Activated naive CD4-positive, alpha-beta T cell treated with anti-CD3 and anti-CD28 coated beads for 36 hours (primary cell): ENCODE measurements at regions of chr19 and their contacts with region 1.

Region 1: DNA sequence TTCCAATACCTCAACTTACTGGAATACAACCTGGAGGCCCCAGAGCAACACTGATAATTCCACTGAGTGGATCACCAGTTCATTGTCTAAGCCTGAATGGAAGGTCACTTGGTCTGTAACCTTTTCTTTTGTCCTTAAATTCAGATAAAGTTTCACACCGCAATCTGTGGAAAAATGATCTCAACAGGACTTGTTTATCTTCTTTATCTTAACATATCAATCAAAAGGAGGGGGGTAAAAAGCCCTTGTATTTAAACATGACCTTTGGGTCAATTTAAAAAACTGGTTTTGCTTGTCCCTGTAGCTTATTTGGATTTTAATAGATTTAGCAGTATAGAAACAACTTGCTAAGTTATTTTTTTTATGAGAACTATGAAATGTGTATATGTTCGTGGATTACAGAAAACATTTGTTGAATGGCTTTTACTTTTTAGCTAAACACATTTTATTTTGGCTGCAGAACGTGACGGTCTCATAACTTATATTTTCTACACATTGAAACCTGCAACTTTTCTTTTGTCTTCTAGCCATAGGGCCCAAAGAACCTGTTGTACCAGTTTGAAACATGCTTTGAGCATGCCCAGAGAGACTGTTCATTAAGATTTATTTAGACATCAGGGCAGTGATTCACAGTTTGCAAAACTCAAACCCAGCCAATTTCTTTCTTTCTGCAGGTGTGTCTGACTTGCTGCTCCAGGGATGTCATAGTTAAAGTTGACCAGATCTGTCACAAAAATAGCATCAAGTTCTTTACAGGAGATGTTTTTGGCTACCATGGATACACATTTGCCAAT is 21.8 kb downstream of the SAE1 start:
- DNase-seq: no peak
- H3K4me3 Mint-ChIP-seq: no peak overlapping the region
- H3K27ac Mint-ChIP-seq: peak overlapping the region; percentile 30
- H3K4me1 Mint-ChIP-seq: peaks cover 60% of the 10 kb centered on the region
- H3K27me3 Mint-ChIP-seq: no peaks in the 10 kb centered on the region

Region 2: DNA sequence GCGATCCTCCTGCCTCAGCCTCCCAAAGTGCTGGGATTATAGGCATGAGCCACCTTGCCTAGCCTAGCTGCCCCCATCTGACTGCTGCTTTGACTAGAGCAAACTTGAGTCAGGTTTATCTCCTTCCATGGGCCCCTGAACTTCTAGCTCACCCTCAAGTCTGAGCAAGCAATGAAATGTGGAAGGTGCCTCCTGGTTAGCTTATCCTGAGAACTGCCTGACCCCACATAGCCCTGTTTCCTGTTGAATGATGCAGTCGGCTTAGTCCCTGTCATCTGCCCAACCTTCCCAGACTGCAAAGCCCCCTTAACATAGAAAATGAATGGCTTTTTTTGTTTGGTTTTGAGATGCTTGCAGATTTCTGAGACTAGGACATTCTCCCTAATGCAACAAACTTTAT is 95.1 kb before region 1 on chr19:
- CTCF ChIA-PET with region 1: no interaction called
- intact Hi-C with region 1: no loop called
- DNase-seq: no peak
- H3K4me3 Mint-ChIP-seq: no peak overlapping the region
- H3K27ac Mint-ChIP-seq: no peak overlapping the region
- H3K4me1 Mint-ChIP-seq: no peaks in the 10 kb centered on the region
- H3K27me3 Mint-ChIP-seq: no peaks in the 10 kb centered on the region

Region 3: DNA sequence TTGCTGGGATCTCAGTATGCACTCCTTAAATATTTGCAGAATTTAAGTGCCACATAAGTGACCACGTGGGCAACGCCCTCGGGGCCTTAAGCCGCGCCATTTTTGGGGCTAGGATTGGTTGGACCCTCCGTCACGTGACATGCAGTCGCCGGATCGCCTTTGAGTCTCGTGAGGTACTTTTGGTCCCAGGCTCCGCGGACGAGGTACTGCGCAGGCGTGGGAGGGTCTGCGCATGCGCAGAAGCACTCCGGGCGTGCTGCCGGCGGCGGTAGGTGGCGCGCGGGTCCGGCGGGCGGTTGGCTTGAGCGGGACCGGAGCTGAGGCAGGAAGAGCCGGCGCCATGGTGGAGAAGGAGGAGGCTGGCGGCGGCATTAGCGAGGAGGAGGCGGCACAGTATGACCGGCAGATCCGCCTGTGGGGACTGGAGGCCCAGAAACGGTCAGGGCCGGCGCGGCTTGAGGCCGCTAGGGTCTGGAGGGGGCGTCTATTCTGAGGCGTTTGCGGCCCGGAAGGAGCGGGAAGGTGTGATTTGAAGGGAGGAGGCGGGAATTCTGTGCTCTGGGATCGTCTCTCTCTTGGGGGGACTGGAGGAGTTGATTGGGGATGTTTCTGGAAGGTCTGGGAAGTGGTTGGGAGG is 21.7 kb before region 1 on chr19 and contains the start of gene SAE1:
- CTCF ChIA-PET with region 1: interaction called, 14 read pairs
- intact Hi-C with region 1: loop called (anchors 2 kb)
- DNase-seq: peak; percentile 95
- H3K4me3 Mint-ChIP-seq: peak within 1 kb of the TSS; percentile 99
- H3K27ac Mint-ChIP-seq: peak within 1 kb of the TSS; percentile 99
- H3K4me1 Mint-ChIP-seq: peaks cover 41% of the 10 kb centered on the region
- H3K27me3 Mint-ChIP-seq: no peaks in the 10 kb centered on the region
- total RNA-seq, gene SAE1: 160 to 161 TPM

Region 4: GRCh38 chr19:47210689-47211316 is 58.4 kb after region 1 on chr19:
- CTCF ChIA-PET with region 1: interaction called, 27 read pairs
- intact Hi-C with region 1: no loop called
- DNase-seq: peak; percentile 94
- H3K4me3 Mint-ChIP-seq: no peak overlapping the region
- H3K27ac Mint-ChIP-seq: peak overlapping the region; percentile 93
- H3K4me1 Mint-ChIP-seq: peaks cover 14% of the 10 kb centered on the region
- H3K27me3 Mint-ChIP-seq: no peaks in the 10 kb centered on the region

Region 5: GRCh38 chr19:47231215-47231984 is 79.0 kb after region 1 on chr19:
- CTCF ChIA-PET with region 1: interaction called, 3 read pairs
- intact Hi-C with region 1: loop called (anchors 1 kb)
- DNase-seq: peak; percentile 95
- H3K4me3 Mint-ChIP-seq: peak overlapping the region; percentile 77
- H3K27ac Mint-ChIP-seq: peak overlapping the region; percentile 87
- H3K4me1 Mint-ChIP-seq: peaks cover 22% of the 10 kb centered on the region
- H3K27me3 Mint-ChIP-seq: no peaks in the 10 kb centered on the region